MCF 10A (cell line): ENCODE measurements at regions of chr7 and their contacts with region 1.

Region 1: GRCh38 chr7:97835296-97836138 is 36.7 kb downstream of the ASNS start:
- DNase-seq: peak; percentile 69
- H3K4me3 Mint-ChIP-seq: no peak overlapping the region
- H3K27ac Mint-ChIP-seq: no peak overlapping the region
- H3K4me1 Mint-ChIP-seq: no peaks in the 10 kb centered on the region
- H3K27me3 Mint-ChIP-seq: peaks cover 65% of the 10 kb centered on the region
- CTCF ChIP-seq: peak; percentile 63

Region 2: DNA sequence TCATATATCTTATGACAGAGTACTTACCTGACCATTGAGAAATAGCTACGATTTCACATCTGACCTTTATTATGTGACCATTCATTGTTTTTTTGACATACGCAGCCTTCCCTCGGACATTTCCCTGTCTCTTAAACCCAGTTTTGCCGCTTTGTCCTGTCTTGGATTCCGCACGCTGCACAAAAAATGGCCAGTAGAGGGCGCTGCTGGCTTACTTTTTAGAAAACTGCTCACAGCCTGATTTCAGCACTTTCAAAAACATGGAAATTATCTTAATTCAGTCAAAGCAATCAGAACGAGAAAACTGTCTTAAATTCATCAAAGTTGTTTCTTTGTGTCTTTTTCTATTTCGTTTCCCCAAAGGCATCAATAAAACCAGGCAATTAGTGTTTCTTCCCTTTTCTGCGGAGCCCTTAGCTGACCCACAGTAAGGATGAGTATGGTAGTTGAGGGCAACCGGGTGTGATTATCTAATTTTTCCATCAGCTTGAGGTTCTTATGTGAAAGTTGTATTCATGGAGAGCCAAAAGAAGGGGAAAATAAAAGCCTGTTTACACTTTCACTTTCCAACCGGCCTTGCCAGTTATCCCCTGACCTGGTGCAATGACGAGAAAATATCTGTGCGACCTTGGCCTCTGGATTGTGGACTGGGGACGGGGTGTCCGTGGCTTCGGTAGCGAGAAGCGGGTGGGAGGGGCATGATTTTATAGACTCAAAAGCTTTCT is 1918.8 kb before region 1 on chr7:
- CTCF ChIA-PET with region 1: interaction called, 5 read pairs
- POLR2A ChIA-PET with region 1: no interaction called
- intact Hi-C with region 1: loop called (anchors 1 kb)
- DNase-seq: peak; percentile 77
- H3K4me3 Mint-ChIP-seq: peak overlapping the region; percentile 24
- H3K27ac Mint-ChIP-seq: no peak overlapping the region
- H3K4me1 Mint-ChIP-seq: no peaks in the 10 kb centered on the region
- H3K27me3 Mint-ChIP-seq: peaks cover 83% of the 10 kb centered on the region
- CTCF ChIP-seq: peak; percentile 75

Region 3: DNA sequence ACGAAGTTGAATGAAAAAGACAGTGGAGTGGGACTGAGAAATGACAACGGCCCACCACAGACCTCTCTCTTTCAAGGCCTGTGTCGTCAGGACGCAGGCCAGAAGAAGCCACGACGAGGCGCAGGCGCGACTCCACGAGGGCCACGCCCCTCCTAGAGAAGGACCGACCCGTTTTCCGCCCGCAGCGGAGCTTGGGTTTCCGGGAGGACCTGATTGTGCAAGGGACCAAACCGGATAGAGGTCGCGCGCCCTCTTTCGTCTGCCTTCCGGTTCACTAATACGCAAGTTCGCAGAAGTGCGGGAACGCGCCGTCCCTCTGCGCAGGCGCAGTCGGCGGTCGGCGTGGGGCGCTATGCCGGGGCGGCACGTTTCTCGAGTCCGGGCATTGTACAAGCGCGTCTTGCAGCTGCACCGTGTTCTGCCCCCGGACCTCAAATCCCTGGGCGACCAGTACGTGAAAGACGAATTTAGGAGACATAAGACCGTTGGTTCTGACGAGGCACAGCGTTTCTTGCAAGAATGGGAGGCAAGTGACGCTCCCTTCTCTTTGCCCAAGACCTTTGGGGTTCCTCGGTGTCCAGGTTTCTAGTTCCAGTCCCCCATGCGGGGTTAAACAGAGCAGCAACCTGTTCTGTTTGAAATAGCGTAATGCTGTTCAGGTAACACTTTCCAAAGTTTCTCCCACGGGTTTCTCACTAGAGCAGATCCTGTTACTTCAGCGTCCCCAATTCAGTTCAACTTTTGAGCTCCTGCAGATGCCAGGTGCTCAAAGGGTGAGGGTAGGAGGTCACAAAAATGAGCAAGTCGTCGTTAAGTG is 717.9 kb before region 1 on chr7 and contains the start of gene SDHAF3:
- CTCF ChIA-PET with region 1: interaction called, 13 read pairs
- POLR2A ChIA-PET with region 1: no interaction called
- intact Hi-C with region 1: no loop called
- DNase-seq: peak; percentile 95
- H3K4me3 Mint-ChIP-seq: peak within 1 kb of the TSS; percentile 94
- H3K27ac Mint-ChIP-seq: peak within 1 kb of the TSS; percentile 68
- H3K4me1 Mint-ChIP-seq: peaks cover 23% of the 10 kb centered on the region
- H3K27me3 Mint-ChIP-seq: no peaks in the 10 kb centered on the region
- CTCF ChIP-seq: no peak
- total RNA-seq, gene SDHAF3: 6.7 and 12.3 TPM in 2 replicates

Region 4: DNA sequence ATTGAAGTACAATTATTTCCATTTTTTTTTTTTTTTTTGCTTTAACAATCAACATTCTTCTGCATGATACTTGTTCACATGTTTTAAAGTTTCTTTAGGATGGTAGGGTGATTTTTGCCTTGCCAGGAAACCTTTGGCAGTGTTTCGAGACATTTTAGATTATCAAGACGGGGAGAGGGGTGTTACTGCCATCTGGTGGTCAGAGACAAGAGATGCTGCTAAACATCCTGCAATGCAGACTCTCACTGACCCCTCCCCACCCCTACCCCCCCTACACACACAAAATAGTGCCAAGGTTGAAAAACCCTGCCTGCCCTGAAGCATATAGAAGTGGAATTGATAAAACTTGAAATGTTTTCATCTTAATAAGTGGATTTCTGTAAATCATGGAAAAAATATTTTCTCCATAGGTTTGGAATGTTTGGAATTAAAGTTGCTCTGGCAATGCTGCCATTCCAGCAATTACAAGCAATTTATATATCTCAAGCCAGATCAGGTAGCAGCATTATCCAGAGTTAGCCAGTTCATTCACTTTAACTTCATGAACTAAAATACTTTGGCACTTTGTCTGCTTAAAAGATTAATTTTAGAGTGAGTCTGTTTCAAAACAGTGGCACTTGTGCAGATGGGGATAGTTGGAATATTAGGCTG is 655.9 kb before region 1 on chr7:
- CTCF ChIA-PET with region 1: interaction called, 7 read pairs
- POLR2A ChIA-PET with region 1: no interaction called
- intact Hi-C with region 1: loop called (anchors 1 kb)
- DNase-seq: peak; percentile 77
- H3K4me3 Mint-ChIP-seq: no peak overlapping the region
- H3K27ac Mint-ChIP-seq: no peak overlapping the region
- H3K4me1 Mint-ChIP-seq: peaks cover 4% of the 10 kb centered on the region
- H3K27me3 Mint-ChIP-seq: no peaks in the 10 kb centered on the region
- CTCF ChIP-seq: peak; percentile 74

Region 5: DNA sequence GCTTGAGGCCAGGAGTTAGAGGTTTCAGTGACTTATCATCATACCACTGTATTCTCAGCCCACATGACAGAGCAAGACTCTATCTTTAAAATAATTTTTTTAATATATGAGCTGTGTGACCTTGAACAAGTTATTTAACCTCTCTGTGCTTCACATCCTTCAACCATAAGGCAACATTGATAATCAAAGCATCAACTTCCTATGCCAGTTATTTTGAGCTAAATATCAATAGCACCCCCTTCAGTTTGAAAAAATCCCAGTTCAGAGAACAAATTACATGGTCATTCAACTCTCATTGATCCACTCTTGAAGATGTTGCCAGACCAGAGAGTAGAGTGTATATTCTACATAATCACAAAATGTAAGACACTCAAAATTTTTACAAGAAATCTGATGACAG is 16.4 kb before region 1 on chr7:
- CTCF ChIA-PET with region 1: interaction called, 25 read pairs
- POLR2A ChIA-PET with region 1: no interaction called
- intact Hi-C with region 1: no loop called
- DNase-seq: peak; percentile 21
- H3K4me3 Mint-ChIP-seq: no peak overlapping the region
- H3K27ac Mint-ChIP-seq: no peak overlapping the region
- H3K4me1 Mint-ChIP-seq: no peaks in the 10 kb centered on the region
- H3K27me3 Mint-ChIP-seq: peaks cover 13% of the 10 kb centered on the region
- CTCF ChIP-seq: peak; percentile 8

Region 6: GRCh38 chr7:97857544-97857943 is 22.0 kb after region 1 on chr7:
- CTCF ChIA-PET with region 1: interaction called, 13 read pairs
- POLR2A ChIA-PET with region 1: no interaction called
- intact Hi-C with region 1: no loop called
- DNase-seq: no peak
- H3K4me3 Mint-ChIP-seq: no peak overlapping the region
- H3K27ac Mint-ChIP-seq: no peak overlapping the region
- H3K4me1 Mint-ChIP-seq: no peaks in the 10 kb centered on the region
- H3K27me3 Mint-ChIP-seq: no peaks in the 10 kb centered on the region
- CTCF ChIP-seq: no peak

Region 7: GRCh38 chr7:99472561-99473243 is 1637.2 kb after region 1 on chr7 and contains the start of gene ZNF789:
- CTCF ChIA-PET with region 1: no interaction called
- POLR2A ChIA-PET with region 1: no interaction called
- intact Hi-C with region 1: no loop called
- DNase-seq: peak; percentile 96
- H3K4me3 Mint-ChIP-seq: peak within 1 kb of the TSS; percentile 91
- H3K27ac Mint-ChIP-seq: peak within 1 kb of the TSS; percentile 92
- H3K4me1 Mint-ChIP-seq: no peaks in the 10 kb centered on the region
- H3K27me3 Mint-ChIP-seq: no peaks in the 10 kb centered on the region
- CTCF ChIP-seq: no peak
- total RNA-seq, gene ZNF789: 15.0 and 19.9 TPM in 2 replicates